AG04449 (cell line): ENCODE measurements at regions of chr14 and their contacts with region 1.

Region 1: DNA sequence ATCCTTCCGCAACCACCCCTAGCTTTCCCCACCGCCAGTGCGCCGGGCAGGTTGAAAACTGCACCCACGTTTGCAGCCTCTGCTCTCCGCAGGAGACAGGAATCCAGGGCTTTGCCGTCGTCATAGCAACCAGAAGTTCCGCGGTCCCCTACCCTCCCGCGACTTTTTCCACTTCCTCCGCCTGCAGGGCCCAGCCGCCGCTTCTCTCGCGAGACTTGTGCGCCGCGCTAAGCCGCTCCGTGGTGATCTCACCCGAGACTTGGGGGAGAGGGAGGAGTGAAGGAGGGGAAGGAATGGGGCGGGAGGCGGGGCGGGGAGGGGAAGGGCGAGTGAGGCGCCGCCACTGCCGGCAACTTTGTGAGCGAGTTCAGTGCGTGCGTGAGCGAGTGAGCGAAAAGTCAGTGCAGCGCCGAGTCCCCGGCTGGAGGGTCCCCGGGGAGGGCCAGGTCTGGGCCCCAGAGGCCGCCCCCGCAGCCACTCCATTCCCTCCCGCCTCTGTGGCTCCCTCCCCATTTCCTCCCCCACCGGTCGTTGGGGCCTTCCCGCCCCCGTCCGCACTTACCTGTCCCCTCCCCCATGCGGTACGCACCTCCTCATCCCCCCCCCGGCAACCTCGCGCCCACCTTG is 413.0 kb downstream of the PCNX1 start:
- DNase-seq: peak; percentile 91
- H3K4me3 ChIP-seq: peak within 1 kb of the TSS; percentile 87
- CTCF ChIP-seq: no peak

Region 2: GRCh38 chr14:71138448-71139293 is 181.5 kb before region 1 on chr14:
- CTCF ChIA-PET with region 1: interaction called, 19 read pairs
- POLR2A ChIA-PET with region 1: interaction called, 15 read pairs
- DNase-seq: no peak
- H3K4me3 ChIP-seq: no peak overlapping the region
- CTCF ChIP-seq: peak; percentile 91

Region 3: DNA sequence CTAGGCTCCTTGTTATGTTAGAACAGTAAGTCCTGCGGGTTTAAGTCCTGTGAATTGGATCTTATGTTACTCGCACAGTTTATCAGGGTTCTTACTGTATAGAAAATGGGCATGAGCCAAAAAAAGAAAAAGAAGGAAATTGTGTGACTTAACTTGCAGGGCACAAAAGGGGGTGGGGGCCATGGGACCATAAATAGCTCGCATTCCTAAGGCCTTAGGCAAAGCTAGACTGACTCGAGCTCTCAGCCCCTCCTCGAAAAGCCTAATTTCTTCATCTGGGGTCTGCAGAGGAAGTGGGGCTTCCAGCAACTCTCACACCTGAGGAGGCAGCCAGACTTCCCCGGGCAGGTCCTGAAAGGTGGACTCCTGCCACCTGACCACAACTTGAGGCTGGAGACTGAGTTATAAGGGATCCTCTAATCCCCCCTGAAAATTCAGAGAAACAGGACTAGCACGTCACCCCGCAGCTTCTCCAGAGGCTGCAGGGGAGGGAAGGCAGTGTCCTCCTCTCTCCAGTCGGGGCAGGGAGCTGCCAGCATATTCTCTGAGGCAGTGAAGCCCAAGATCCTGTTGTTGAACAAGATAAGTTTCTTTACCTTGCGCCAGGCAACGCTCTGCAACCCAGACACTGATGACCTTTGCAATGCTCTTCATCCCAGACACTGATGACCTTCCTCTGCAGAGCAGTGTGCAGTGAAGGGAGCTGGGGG is 132.4 kb before region 1 on chr14:
- CTCF ChIA-PET with region 1: no interaction called
- POLR2A ChIA-PET with region 1: no interaction called
- DNase-seq: no peak
- H3K4me3 ChIP-seq: no peak overlapping the region
- CTCF ChIP-seq: no peak

Region 4: DNA sequence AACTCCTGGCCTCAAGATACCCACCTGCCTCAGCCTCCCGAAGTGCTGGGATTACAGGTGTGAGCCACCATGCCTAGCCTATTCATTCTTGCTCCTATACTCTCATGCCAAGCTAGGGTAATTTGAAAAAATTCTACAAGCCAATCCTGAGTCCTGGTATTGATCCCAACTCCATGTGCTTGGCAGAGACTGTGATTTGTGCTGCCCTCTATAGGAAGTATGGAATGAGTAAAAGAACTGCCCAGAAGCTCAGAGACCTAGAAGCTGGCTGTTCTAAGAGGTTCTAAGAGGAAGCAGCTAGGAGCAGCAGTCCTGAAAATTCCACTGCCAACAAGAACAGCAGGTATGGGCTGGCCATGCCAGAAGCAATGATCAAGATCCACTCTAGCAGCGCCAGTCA is 10.5 kb before region 1 on chr14:
- CTCF ChIA-PET with region 1: no interaction called
- POLR2A ChIA-PET with region 1: no interaction called
- DNase-seq: no peak
- H3K4me3 ChIP-seq: no peak overlapping the region
- CTCF ChIP-seq: no peak

Region 5: DNA sequence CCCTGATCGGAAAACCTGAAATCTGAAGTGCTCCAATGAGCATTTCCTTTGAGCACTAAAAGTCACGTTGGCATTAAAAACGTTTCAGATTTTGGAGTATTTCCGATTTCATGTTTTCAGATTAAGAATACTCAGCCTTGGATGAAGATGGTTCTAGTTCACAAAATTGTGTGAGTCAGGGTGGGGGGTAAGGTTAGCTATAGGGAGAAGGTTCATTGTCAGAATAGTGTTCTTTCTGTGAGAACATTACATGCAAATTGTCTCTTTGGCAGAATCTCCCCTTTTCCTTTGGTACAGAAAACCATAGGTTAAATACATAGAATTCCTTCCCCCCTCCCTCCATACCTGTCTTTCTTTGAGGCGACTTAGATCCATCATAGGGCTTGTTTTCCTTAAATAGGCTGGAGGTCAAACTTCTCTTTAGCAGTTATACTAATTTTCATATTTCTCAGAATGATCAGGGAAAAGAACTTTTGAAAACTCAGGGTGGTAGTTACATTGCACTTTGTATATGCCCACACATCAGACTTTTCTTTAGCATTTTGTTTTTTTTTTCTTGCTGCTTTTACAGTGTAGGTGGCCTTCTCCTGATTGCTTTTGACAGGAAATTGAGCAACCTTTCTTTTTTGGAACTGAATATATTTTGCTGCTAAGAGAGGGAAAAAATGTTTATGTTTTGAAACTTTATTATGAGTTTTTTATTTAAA is 90.5 kb after region 1 on chr14:
- CTCF ChIA-PET with region 1: interaction called, 10 read pairs
- POLR2A ChIA-PET with region 1: no interaction called
- DNase-seq: no peak
- H3K4me3 ChIP-seq: no peak overlapping the region
- CTCF ChIP-seq: no peak